Endothelial cell of umbilical vein (primary cell): ENCODE measurements at regions of chr18 and their contacts with region 1.

Region 1: DNA sequence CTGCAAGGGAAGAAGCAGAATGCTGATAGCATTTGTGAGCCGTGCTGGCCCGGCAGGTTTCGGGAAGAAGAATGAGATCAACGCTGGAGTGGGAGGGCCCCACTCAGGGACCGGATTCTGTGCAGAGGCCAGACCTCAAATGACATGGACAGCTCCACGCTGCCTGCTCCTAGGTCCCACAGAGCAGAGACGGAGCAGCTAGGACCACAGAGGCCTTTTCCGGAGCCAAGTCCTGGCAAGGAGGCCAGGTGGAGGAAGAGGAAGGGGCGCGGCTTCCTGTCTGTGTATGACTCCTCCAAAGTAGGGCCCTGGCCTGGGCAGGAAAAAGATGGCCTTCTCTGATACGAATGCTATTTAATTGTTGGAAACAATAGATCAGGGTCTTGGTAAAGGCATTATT is 139.9 kb downstream of the LRRC30 start:
- DNase-seq: peak; percentile 88
- H3K4me3 ChIP-seq: peak overlapping the region in 1 of 3 experiments; percentile 29
- H3K27ac ChIP-seq: peak overlapping the region; percentile 98
- H3K4me1 ChIP-seq: peaks cover 35% of the 10 kb centered on the region
- H3K27me3 ChIP-seq: peaks cover 0 to 2% of the 10 kb centered on the region in 2 experiments
- CTCF ChIP-seq: no peak
- POLR2A ChIP-seq: no peak

Region 2: GRCh38 chr18:7233134-7233810 is 137.5 kb before region 1 on chr18:
- CTCF ChIA-PET with region 1: no interaction called
- POLR2A ChIA-PET with region 1: no interaction called
- dilution Hi-C with region 1: no loop called
- intact Hi-C with region 1: no loop called
- DNase-seq: no peak
- H3K4me3 ChIP-seq: no peak overlapping the region
- H3K27ac ChIP-seq: no peak overlapping the region
- H3K4me1 ChIP-seq: no peaks in the 10 kb centered on the region
- H3K27me3 ChIP-seq: peaks cover 3% of the 10 kb centered on the region in 2 experiments
- CTCF ChIP-seq: no peak
- POLR2A ChIP-seq: no peak

Region 3: DNA sequence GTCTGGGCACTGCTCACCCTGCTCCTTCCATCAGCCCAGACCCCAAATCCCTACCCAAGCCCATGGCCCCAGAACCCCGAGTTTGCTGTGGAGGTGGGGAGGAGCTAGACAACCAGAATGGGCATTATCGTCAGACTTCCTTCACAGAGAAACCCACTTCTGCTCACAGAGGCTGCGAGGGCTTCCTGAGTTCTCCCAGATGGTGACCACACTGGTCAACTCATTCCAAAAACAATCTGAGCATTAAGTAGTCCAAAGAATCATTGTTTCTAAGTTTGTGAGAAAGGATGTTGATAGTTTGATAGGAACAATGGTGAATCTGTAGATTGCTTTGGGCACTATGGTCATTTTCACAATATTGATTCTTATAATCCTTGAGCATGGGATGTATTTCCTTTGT is 79.8 kb before region 1 on chr18:
- CTCF ChIA-PET with region 1: interaction called, 4 read pairs
- POLR2A ChIA-PET with region 1: no interaction called
- dilution Hi-C with region 1: no loop called
- intact Hi-C with region 1: loop called (anchors 1 kb)
- DNase-seq: peak; percentile 45
- H3K4me3 ChIP-seq: no peak overlapping the region
- H3K27ac ChIP-seq: no peak overlapping the region
- H3K4me1 ChIP-seq: peaks cover 4% of the 10 kb centered on the region
- H3K27me3 ChIP-seq: no peaks in the 10 kb centered on the region
- CTCF ChIP-seq: no peak
- POLR2A ChIP-seq: no peak

Region 4: DNA sequence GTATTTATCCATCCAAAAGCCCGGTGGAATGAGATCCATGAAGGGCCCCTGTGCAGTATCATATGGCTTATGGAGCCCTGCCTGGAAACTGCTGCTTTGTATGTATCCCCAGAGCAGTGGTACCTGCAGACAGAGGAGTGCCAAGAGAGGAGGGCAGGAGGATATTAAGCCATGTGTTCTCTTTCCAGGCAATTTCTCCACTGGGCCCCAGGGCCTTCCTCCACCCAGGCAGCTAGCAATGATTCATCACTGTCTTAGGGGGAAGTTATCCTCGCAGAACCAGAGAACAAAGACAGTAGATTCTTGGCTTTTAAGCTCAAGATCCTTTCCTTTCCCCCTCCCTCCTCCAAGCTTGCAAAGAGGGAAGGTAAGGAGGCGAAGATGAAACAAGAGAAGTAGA is 41.8 kb before region 1 on chr18:
- CTCF ChIA-PET with region 1: interaction called, 11 read pairs
- POLR2A ChIA-PET with region 1: interaction called, 13 read pairs
- dilution Hi-C with region 1: no loop called
- intact Hi-C with region 1: loop called (anchors 1 kb)
- DNase-seq: no peak
- H3K4me3 ChIP-seq: no peak overlapping the region
- H3K27ac ChIP-seq: no peak overlapping the region
- H3K4me1 ChIP-seq: peaks cover 24% of the 10 kb centered on the region
- H3K27me3 ChIP-seq: no peaks in the 10 kb centered on the region
- CTCF ChIP-seq: no peak
- POLR2A ChIP-seq: no peak

Region 5: DNA sequence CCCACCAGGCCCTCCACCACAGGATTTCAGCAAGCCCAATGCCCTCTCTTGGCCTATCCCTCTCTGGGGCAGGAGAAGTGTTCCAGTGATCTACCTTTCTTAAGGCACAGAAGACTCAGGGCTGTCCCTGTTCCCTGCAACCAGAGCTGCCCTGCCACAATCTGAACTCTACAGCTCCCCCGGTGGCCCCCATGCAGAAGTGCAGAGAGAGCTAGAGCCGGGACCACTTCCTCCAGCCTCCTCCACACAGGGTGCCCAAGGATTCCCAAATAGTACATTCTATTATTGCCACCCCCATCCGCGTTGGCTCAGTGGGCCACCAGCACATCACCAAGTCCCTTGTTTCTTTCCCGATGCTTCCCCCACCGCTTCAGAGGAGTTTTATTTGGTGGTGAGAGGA is 81.5 kb after region 1 on chr18:
- CTCF ChIA-PET with region 1: interaction called, 7 read pairs
- POLR2A ChIA-PET with region 1: interaction called, 3 read pairs
- dilution Hi-C with region 1: no loop called
- intact Hi-C with region 1: loop called (anchors 2 kb)
- DNase-seq: peak; percentile 32
- H3K4me3 ChIP-seq: no peak overlapping the region
- H3K27ac ChIP-seq: no peak overlapping the region
- H3K4me1 ChIP-seq: no peaks in the 10 kb centered on the region
- H3K27me3 ChIP-seq: peaks cover 2 to 4% of the 10 kb centered on the region in 2 experiments
- CTCF ChIP-seq: peak; percentile 61 to 80
- POLR2A ChIP-seq: no peak

Region 6: DNA sequence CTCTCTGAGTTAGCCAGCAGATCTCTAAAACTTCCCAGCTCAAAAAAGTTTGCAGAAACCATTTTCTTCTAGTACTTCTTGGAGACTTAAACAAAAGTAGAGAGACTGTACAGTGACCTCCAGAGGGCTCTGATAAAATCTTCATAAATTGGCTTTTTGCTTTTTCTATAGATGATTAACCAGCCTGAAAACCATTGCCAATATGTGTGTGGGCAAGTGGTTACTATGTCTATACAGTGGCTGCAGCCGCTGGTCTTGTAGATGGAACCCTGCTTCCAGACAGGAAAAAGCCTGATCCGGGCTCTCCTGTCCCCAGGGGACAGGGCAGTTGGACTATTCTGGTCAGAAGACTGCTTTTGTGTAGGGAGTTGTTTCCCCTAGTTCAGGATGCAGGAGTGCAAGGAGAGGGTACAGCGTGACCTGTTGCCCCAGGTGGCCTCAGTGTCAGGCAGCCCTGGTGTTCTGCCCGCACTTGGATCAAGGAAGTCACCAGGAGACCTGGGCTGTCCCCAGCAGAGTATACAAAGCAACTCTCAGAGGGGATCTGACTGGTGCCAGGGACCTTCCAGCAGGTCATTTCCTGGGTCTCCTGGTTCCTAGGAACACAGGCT is 189.0 kb after region 1 on chr18:
- CTCF ChIA-PET with region 1: no interaction called
- POLR2A ChIA-PET with region 1: no interaction called
- dilution Hi-C with region 1: no loop called
- intact Hi-C with region 1: loop called (anchors 2 kb)
- DNase-seq: no peak
- H3K4me3 ChIP-seq: no peak overlapping the region
- H3K27ac ChIP-seq: no peak overlapping the region
- H3K4me1 ChIP-seq: peaks cover 22% of the 10 kb centered on the region
- H3K27me3 ChIP-seq: no peaks in the 10 kb centered on the region
- CTCF ChIP-seq: no peak
- POLR2A ChIP-seq: no peak

Region 7: DNA sequence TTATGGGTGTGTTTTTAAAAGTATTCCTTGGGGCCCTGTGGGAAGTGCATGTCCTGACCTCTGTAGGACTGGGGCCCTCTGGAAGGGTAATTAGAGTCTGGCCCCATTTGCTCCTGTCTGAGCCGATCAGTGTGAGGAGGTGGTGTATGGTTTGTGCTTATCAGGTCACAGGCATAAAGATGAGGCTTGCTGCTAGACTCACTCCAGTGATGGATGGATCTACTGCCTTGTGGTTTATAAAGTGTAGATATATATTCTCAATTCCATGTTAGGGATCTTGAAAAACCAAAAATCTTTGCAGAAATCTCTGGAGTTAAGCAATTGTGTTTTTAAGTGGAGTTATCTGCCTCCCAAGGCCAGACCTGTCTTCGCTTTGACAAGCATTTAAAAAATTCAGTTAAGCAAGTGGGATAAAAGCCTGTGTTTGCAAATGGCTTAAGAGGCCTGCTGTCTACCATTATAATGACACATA is 378.7 kb after region 1 on chr18:
- CTCF ChIA-PET with region 1: no interaction called
- POLR2A ChIA-PET with region 1: no interaction called
- dilution Hi-C with region 1: no loop called
- intact Hi-C with region 1: loop called (anchors 10 kb)
- DNase-seq: peak; percentile 45
- H3K4me3 ChIP-seq: no peak overlapping the region
- H3K27ac ChIP-seq: no peak overlapping the region
- H3K4me1 ChIP-seq: peaks cover 28% of the 10 kb centered on the region
- H3K27me3 ChIP-seq: no peaks in the 10 kb centered on the region
- CTCF ChIP-seq: no peak
- POLR2A ChIP-seq: no peak

Region 8: GRCh38 chr18:7896805-7897518 is 526.2 kb after region 1 on chr18:
- CTCF ChIA-PET with region 1: no interaction called
- POLR2A ChIA-PET with region 1: no interaction called
- dilution Hi-C with region 1: no loop called
- intact Hi-C with region 1: no loop called
- DNase-seq: no peak
- H3K4me3 ChIP-seq: no peak overlapping the region
- H3K27ac ChIP-seq: no peak overlapping the region
- H3K4me1 ChIP-seq: no peaks in the 10 kb centered on the region
- H3K27me3 ChIP-seq: no peaks in the 10 kb centered on the region
- CTCF ChIP-seq: no peak
- POLR2A ChIP-seq: no peak

Region 9: DNA sequence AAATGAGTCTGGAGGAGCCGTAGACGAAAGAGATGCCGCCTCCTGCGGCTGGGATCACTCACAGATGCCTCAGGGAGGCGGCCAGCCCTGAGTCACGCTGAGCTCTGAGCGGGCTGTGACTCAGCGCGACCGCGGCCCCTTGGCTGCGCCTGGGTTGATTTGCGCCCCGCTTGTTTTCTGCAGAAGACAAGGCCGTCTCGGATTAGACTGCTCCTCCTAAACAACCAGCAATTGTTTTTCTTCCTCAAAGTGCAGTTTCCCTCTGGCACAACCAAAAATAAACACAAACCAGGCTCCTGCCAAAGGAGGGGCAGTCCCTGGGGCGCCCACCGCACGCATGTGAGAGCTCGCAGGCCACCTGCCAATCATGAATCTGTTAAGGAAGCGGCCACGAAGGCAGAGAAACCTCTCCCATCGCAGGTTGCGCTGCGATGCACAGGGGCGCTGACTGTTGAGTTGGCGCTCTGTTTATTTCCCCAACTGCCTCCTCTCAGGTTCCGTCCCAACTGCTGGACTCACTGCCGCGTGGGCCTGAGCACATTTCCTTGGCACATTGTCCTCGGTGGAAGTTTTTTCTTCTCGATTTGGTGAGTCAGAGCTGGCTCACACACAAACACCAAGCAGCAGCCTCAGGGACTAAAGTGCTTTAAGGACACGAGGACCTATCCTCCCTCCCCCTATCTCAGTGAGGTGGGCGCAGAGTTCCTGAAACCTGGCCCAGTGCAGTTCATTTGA is 1646.5 kb after region 1 on chr18:
- CTCF ChIA-PET with region 1: no interaction called
- POLR2A ChIA-PET with region 1: no interaction called
- dilution Hi-C with region 1: no loop called
- intact Hi-C with region 1: loop called (anchors 10 kb)
- DNase-seq: peak; percentile 87
- H3K4me3 ChIP-seq: no peak overlapping the region
- H3K27ac ChIP-seq: peak overlapping the region; percentile 90
- H3K4me1 ChIP-seq: peaks cover 23% of the 10 kb centered on the region
- H3K27me3 ChIP-seq: no peaks in the 10 kb centered on the region
- CTCF ChIP-seq: no peak
- POLR2A ChIP-seq: peak; percentile 23